Adrenal gland (tissue), 19 donors: ENCODE measurements at regions of chr16 and their contacts with region 1.

Region 1: GRCh38 chr16:48542020-48542473 is 67.9 kb downstream of the N4BP1 start:
- DNase-seq: peak; percentile 49 to 84 (median 69)
- H3K4me3 ChIP-seq: no peak overlapping the region
- H3K27ac ChIP-seq: peak overlapping the region in 1 of 5 donors; percentile 31
- H3K4me1 ChIP-seq: peaks cover 0 to 16% of the 10 kb centered on the region in 2 donors
- H3K27me3 ChIP-seq: no peaks in the 10 kb centered on the region
- CTCF ChIP-seq: peak; percentile 36 to 73 (median 60)
- POLR2A ChIP-seq: no peak

Region 2: DNA sequence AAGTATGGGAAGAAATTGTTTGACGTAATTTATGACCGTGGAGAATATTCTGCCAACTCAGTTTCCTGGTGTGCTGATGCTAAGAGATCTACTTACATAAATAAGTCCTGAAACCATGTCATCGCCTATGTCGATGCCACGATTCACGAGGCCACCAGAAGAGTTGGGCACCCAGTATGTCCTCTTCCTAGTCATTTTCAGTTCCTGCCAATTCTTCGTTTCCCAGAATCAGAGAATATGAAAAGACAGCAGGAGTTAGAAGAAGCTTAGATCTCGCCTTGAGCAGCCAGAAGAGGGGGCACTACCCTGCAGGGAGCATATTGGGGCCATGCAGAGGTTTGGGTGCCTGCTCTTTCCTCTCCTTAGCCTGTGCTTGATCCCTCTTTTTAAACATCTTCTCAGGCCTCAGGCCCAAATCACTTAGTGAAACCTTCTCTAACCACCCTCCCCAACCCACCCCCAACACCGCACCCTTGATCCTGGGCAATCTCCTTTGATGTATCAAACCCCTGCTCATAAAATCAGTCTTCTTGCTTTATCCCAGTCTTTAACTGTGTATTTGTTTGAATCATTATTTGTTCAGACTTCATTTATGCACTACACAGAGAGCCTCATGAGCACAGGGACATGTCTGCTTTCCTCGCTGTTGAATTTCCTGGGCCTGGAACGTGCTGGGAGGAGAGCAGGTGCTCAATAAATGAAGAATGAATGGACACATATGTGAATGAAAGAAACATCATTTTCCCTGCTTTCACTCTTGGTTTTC is 310.1 kb before region 1 on chr16:
- intact Hi-C with region 1: loop called in 1 of 2 experiments (anchors 10 kb)
- DNase-seq: peak in 6 of 7 donors; percentile 25 to 57 (median 42)
- H3K4me3 ChIP-seq: no peak overlapping the region
- H3K27ac ChIP-seq: no peak overlapping the region
- H3K4me1 ChIP-seq: no peaks in the 10 kb centered on the region
- H3K27me3 ChIP-seq: no peaks in the 10 kb centered on the region
- CTCF ChIP-seq: peak in 3 of 6 experiments; percentile 35 to 45 (median 44)
- POLR2A ChIP-seq: no peak

Region 3: DNA sequence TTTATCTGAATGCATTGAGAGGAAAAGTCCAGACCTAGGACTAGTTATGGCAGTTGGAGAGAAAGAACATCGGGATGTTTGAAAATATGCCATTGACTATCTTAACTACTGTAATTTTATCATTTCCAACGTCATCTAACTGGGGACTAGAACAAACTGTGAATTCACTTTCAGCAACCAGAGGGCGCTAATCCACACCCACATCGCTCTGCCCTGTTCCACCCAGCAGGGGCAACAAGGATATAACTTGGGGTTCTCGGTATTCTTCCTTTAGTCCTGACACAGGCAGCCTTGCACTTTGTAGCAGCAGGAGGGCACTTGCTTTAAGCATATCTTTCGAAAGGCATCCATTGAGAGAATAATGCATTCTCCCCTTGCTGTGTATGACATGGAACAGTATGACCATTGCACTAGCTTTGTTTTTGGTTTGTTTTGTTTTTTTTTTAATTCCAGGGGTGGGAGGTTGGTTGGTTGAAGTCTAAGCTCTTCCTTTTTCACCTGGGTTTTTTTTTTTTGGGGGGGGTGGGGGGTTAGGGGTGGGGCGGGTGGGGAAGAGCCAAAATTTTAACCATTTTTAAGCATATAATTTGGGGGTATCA is 188.4 kb before region 1 on chr16:
- intact Hi-C with region 1: loop called (anchors 10 kb)
- DNase-seq: peak; percentile 56 to 82 (median 69)
- H3K4me3 ChIP-seq: no peak overlapping the region
- H3K27ac ChIP-seq: no peak overlapping the region
- H3K4me1 ChIP-seq: peaks cover 0 to 16% of the 10 kb centered on the region in 2 donors
- H3K27me3 ChIP-seq: no peaks in the 10 kb centered on the region
- CTCF ChIP-seq: peak; percentile 73 to 99 (median 94)
- POLR2A ChIP-seq: no peak

Region 4: DNA sequence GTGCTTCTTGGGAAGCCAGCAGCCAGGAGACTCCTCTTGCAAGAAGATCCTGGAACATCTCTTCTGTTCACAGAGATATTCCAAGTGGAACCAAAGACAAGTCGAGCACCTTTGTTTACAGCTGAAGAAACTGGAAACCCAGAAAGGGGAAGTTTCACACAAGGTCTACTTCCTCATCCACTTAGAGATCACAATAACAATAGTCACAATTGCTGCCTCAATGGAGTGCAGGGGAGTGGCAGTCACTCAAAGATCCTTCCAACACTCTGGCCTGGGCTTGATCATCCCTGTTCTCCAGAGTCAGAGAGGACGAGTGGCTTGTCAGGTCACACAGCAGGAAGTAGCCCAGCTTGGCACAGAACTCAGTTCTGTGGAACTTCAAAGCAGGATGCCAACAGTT is 109.9 kb before region 1 on chr16:
- intact Hi-C with region 1: no loop called
- DNase-seq: peak in 1 of 7 donors; percentile 16
- H3K4me3 ChIP-seq: no peak overlapping the region
- H3K27ac ChIP-seq: peak overlapping the region in 1 of 5 donors; percentile 17
- H3K4me1 ChIP-seq: no peaks in the 10 kb centered on the region
- H3K27me3 ChIP-seq: no peaks in the 10 kb centered on the region
- CTCF ChIP-seq: no peak
- POLR2A ChIP-seq: no peak

Region 5: DNA sequence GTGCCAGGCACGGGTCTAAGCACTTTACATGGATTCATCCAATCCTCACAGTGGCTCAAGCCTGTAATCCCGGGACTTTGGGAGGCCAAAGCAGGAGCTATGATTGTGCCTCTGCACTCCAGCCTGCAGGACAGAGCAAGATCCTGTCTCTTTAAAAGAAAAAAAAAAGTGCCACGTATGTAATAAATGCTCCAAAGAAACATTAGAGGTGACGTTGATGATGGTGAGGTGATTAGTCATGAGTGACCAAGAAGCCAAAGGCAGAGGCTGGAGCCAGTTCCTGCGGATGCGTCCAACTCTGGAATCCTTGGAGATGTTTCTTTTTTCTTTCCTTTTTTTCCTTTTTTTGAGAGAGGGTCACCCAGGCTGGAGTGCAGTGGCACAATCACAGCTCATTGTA is 97.5 kb before region 1 on chr16:
- intact Hi-C with region 1: no loop called
- DNase-seq: peak in 6 of 7 donors; percentile 22 to 58 (median 32)
- H3K4me3 ChIP-seq: no peak overlapping the region
- H3K27ac ChIP-seq: peak overlapping the region in 4 of 5 donors; percentile 43 to 83 (median 66)
- H3K4me1 ChIP-seq: peaks cover 0 to 9% of the 10 kb centered on the region in 2 donors
- H3K27me3 ChIP-seq: no peaks in the 10 kb centered on the region
- CTCF ChIP-seq: no peak
- POLR2A ChIP-seq: no peak

Region 6: GRCh38 chr16:48597563-48598387 is 55.7 kb after region 1 on chr16:
- intact Hi-C with region 1: no loop called
- DNase-seq: no peak
- H3K4me3 ChIP-seq: no peak overlapping the region
- H3K27ac ChIP-seq: no peak overlapping the region
- H3K4me1 ChIP-seq: peaks cover 0 to 50% of the 10 kb centered on the region in 2 donors
- H3K27me3 ChIP-seq: no peaks in the 10 kb centered on the region
- CTCF ChIP-seq: no peak
- POLR2A ChIP-seq: no peak

Region 7: DNA sequence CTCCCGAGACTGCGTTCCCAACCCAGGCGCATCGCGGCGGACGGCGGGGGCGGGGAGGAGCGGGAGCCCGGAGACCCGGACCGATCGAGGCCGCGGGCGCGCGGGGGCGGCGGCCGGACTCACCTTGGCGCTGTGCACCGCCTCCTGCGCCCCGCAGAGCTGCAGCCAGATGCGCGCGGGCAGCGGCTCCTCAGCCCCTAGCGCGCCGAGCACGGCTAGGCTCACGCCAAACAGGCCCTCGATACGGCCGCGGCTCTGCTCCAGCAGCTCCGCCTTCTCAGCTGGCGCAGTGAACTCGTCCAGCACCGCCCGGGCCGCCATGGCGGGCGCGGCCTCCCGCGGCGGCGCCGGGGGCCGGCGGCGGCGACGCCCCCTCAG is 67.6 kb after region 1 on chr16:
- intact Hi-C with region 1: loop called in 1 of 2 experiments (anchors 10 kb)
- DNase-seq: peak; percentile 60 to 69 (median 61)
- H3K4me3 ChIP-seq: peak overlapping the region; percentile 9 to 92 (median 58)
- H3K27ac ChIP-seq: peak overlapping the region in 4 of 5 donors; percentile 80 to 99 (median 90)
- H3K4me1 ChIP-seq: peaks cover 15 to 42% of the 10 kb centered on the region in 2 donors
- H3K27me3 ChIP-seq: no peaks in the 10 kb centered on the region
- CTCF ChIP-seq: no peak
- POLR2A ChIP-seq: no peak